KBM-7 (cell line): ENCODE measurements at regions of chr2 and their contacts with region 1.

Region 1: GRCh38 chr2:16613539-16614011 is 52.1 kb downstream of the CYRIA start:
- DNase-seq: peak; percentile 56

Region 2: DNA sequence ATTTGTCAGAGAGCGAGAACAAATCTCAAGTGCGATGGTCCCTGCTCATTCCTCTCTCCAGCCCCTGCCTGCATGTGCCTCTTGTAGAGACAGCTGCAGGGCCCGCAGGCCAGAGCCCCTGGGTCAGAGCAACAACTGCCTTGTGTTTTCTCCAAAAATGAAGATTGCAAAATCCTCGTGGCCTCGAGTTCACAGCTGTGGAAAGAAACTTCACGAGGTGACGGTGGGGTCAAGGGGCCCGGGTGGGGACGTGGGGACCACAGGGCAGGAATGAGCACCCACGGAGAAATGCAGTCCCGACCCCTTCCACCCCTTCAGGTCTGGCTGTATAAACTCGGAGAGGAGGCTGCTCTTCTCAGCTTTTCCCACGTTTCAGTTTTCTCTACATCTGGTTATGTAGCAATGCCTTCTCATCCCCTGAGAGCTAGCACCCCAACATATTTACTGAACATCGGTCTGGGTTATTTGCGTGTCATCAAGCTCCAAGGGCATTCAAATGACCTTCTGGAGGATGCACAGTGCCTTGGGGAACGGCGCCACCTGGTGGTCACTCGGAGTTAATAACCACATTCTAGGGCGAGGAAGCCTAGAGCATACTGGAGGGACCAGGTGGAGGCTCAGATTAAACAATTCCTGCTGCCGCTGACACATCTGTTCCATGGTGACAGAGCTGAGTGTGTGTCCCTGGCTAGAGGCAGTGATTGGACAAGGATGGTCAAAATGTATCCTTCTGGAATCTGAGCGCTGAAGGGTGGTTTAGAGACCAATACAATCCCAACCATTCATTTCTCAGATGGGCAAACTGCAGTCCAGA is 143.5 kb after region 1 on chr2:
- in situ Hi-C with region 1: loop called (anchors 10 kb)
- DNase-seq: peak; percentile 73